PC-9 (cell line): ENCODE measurements at regions of chr15 and their contacts with region 1.

Region 1: GRCh38 chr15:80058851-80059785 is at the start of gene ZFAND6:
- DNase-seq: peak; percentile 85 to 96
- H3K4me3 ChIP-seq: peak within 1 kb of the TSS; percentile 93
- H3K27ac ChIP-seq: peak within 1 kb of the TSS; percentile 92
- H3K4me1 ChIP-seq: peaks cover 32% of the 10 kb centered on the region
- H3K27me3 ChIP-seq: no peaks in the 10 kb centered on the region
- CTCF ChIP-seq: no peak
- total RNA-seq, gene ZFAND6: 43.6 and 68.3 TPM in 2 replicates

Region 2: DNA sequence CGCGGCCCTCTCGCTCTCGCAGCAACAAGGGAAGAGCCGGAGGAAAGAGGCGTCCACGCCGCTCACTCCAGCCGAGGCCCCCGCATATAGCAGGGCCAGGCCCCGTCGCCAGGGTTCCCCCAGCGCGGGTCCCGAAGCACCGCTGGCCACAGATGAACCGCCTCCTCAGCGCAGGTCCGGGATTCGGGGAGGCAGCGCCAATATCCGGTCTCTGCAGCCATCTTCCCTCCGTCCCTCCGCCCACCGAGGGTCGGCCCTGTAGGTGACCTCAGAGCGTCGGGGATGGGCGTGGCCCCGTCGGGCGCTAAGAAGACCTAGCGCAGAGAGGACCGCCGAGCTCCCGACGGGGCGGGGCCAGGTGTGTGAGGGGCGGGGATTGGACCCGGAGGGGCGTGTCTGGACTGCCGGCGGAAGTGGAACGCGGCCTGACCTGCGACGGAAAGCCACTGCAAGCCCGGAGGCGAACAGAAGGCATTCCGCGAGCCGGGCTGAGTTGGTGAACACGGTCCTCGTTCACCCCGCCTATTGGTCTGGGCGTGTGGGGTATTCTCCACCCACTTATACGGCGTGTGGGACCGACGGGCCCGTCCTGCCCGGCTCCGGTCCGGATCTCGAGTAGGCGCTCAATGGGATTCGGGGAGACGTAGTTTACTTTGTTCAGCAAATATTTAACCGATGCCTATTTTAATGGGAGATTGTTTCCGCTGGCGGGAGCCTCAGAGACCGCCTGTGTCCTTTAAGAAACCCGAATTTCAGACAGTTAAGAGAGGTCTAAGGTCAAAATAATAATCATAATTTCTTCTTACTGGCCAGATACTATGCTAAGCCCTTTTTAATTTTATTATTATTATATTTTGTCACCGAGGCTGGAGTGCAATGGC is 135.4 kb before region 1 on chr15:
- CTCF ChIA-PET with region 1: no interaction called
- POLR2A ChIA-PET with region 1: interaction called, 3 read pairs
- intact Hi-C with region 1: loop called (anchors 2 kb)
- DNase-seq: peak; percentile 91 to 99
- H3K4me3 ChIP-seq: peak overlapping the region; percentile 75
- H3K27ac ChIP-seq: peak overlapping the region; percentile 77
- H3K4me1 ChIP-seq: 0 out of 2 replicates have a peak, but pooled peaks cover 8% of the 10 kb centered on the region
- H3K27me3 ChIP-seq: no peaks in the 10 kb centered on the region
- CTCF ChIP-seq: no peak

Region 3: GRCh38 chr15:80031841-80032240 is 27.3 kb before region 1 on chr15:
- CTCF ChIA-PET with region 1: no interaction called
- POLR2A ChIA-PET with region 1: interaction called, 4 read pairs
- intact Hi-C with region 1: loop called (anchors 1 kb)
- DNase-seq: no peak
- H3K4me3 ChIP-seq: no peak overlapping the region
- H3K27ac ChIP-seq: peak overlapping the region; percentile 95
- H3K4me1 ChIP-seq: peaks cover 31% of the 10 kb centered on the region
- H3K27me3 ChIP-seq: no peaks in the 10 kb centered on the region
- CTCF ChIP-seq: no peak

Region 4: DNA sequence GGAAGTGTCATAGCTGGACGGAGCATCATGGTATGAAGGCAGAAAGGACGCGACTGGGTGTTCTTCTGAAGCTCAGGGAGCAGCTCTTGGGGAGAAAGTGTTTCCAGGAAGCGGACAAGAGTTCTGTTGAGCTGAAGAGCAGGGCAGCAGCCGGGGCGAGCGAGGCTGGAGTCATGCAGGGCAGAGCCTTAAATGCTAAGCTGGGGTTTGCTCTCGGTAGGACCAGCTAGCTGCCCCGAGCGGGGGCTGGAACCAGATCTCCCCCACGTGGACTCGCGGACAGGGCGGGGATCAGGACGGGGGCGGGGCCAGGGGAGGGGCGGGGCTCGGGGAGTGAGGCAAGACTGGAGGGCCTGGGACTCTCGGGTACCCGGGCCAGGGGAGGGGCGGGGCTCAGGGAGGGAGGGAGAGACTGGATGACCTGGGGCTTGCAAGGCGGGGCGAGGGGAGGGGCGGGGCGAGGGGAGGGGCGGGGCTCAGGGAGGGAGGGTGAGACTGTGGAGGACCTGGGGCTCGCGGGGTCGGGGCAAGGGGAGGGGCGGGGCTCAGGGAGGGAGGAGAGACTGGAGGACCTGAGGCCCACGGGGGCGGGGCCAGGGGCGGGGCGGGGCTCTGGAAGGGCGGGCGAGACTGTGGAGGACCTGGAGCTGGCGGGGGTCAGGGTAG is 93.2 kb after region 1 on chr15:
- CTCF ChIA-PET with region 1: interaction called, 30 read pairs
- POLR2A ChIA-PET with region 1: no interaction called
- intact Hi-C with region 1: loop called (anchors 2 kb)
- DNase-seq: peak; percentile 79 to 81
- H3K4me3 ChIP-seq: peak overlapping the region; percentile 64
- H3K27ac ChIP-seq: peak overlapping the region; percentile 60
- H3K4me1 ChIP-seq: peaks cover 26% of the 10 kb centered on the region
- H3K27me3 ChIP-seq: no peaks in the 10 kb centered on the region
- CTCF ChIP-seq: no peak

Region 5: GRCh38 chr15:80173022-80173759 is 114.1 kb after region 1 on chr15:
- CTCF ChIA-PET with region 1: no interaction called
- POLR2A ChIA-PET with region 1: interaction called, 4 read pairs
- intact Hi-C with region 1: loop called (anchors 5 kb)
- DNase-seq: peak; percentile 58 to 78
- H3K4me3 ChIP-seq: no peak overlapping the region
- H3K27ac ChIP-seq: no peak overlapping the region
- H3K4me1 ChIP-seq: peaks cover 8% of the 10 kb centered on the region; the same call in 1 of the 2 replicates
- H3K27me3 ChIP-seq: no peaks in the 10 kb centered on the region
- CTCF ChIP-seq: peak; percentile 82